Cardiac septum (tissue), 1 donor: ENCODE measurements at regions of chr19 and their contacts with region 1.

Region 1: DNA sequence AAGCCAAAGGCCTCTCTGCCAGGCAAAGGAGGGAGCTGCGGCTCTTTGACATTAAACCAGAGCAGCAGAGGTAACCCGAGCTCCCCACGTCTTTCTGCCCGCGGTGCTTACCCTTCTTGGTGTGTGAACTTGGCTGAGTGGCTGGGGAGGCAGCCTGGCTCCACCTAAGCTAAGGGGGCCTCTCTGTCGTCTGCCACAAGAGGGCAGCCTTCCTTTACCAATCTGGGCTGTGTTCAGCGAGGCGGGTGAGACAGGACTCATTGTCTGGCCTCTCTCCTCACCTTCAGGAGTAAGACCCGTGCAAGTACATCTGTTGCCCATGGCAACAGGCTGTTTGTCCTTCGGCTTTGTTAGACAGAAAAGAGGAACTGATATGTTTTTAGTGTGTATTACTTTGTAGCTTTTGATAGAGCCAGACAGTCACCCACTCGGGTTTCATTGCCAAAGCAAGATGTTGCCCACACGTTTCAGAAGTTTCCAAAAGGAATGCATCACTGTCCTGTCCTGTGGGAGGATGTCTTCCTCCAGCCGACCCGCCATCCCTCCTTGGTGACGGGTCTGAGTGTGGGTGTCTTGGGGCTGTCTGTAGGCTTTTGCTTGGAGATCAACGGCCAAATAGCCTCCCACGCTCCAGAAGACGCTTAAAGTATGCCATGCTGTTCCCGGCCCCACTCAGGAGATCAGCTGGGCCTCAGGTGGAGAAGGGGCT is 4.6 kb downstream of the POP4 start:
- DNase-seq: peak; percentile 84

Region 2: DNA sequence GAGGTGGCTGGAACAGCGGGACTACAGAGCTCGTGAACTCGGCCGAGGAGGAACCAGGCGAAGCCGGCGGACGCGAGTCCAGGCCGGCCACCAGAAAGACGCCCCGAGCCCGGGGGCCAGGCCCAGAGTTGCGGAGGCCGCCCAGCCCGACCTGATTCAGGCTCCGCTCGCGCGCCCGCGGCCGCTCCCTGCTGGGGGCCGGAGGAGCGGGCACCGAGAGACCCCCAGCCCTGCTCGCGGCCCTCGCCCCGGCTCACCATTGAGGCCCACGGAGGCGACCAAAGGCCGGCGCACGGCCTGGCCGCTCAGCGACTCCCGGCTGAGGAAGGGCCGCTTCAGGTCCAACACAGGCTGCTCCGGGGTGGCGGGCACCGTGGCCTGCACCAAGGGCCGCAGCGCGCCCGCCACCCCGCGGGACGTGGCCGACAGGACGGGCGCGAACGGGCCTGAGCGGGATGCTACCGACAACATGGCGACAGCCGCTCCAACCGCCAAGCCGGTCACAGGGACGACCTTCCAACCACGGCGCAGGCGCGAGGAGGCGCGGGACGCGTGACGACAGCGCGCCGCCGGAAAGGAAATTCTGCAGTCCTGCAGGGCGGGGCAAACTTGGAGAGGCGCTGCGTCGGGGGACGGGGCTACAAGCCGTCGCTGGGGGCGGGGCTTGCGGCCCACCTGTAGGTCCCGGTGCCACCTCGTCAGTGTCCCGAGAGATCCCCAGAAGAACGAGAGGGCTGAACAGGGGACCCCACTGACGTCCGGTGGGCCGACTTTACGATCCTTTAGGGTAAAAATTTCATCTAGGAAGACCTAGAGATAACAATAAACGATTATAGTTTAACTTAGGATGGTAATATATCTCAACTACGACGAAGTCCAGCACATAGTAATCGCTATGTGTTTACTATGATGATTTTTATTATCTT is 397.8 kb before region 1 on chr19 and contains the start of gene UQCRFS1:
- intact Hi-C with region 1: loop called (anchors 10 kb)
- DNase-seq: peak; percentile 97
- total RNA-seq, gene UQCRFS1: 112 TPM

Region 3: GRCh38 chr19:29694669-29695627 is 84.2 kb after region 1 on chr19:
- intact Hi-C with region 1: loop called (anchors 2 kb)
- DNase-seq: peak; percentile 91

Region 4: DNA sequence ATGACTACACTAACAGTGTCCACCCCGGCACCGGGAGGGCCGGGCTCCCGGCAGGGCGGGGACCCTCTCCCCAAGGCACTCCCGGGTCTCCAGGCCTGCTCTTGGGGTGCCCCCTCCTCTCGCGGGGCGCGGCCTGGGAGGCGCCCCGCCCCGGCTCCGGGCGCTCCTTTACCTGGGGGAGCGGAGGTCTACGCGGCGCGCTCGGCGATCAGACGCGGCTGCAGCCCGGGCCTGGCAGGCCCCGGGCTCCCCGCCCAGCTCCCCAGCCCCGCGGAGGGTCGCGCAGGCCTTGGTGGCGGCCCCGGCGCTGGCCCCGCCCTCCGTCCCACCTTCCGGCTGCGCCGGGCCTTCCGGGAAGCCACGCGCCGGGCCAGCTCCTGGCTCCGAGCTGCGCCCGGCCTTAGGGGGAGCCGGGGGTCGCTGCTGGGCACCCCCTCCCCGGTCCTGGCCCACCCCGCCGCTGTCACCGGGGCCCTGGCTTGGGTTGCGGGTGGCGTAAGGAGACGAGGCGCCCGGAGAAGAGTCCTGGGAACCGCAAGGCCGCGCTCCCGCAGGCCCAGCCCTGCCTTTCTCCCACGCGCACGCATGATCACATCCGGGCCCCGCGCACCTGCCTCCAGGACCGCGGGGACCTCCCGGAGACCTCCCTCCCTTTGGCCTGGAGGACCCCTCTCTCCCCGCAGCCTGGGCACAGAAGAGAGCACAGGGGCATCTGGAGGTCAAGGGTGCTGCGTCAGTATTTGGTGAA is 104.4 kb after region 1 on chr19 and contains the start of gene C19orf12:
- intact Hi-C with region 1: loop called (anchors 2 kb)
- DNase-seq: no peak
- total RNA-seq, gene C19orf12: 38.0 TPM